Activated CD4-positive, alpha-beta T cell treated with anti-CD3 and anti-CD28 coated beads, Interleukin-2, amount 10 ng/mL, durations not matched to agents 24 days and 14 days (primary cell): ENCODE measurements at regions of chr12 and their contacts with region 1.

Region 1: DNA sequence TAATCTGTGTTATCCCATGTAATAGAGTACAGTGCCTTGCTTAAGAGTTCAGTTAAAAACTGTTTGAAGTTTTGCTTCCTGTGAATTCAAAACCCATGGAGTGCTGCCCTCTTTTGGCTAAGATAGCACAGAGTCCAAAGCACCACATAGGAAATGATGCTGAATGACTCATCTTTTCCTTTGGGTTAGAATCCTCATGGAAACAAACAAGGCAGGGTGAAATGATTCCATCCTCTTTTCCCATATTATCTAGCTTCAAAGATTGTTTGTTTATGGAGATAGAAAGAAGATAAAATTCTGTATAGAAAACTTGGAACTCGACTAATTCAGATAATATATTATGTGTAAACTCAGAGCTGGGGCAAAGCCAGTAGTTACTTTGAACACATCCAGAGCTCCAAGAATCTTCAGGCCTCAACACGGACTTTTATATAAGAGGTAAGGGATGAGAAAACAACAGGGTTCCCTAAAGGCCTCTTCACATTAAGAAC is 87.4 kb downstream of the OTOGL start:
- DNase-seq: peak; percentile 83
- H3K4me3 Mint-ChIP-seq: no peak overlapping the region
- H3K27ac Mint-ChIP-seq: no peak overlapping the region
- H3K4me1 Mint-ChIP-seq: peaks cover 9% of the 10 kb centered on the region
- H3K27me3 Mint-ChIP-seq: peaks cover 2% of the 10 kb centered on the region

Region 2: GRCh38 chr12:79547735-79548609 is 638.8 kb before region 1 on chr12:
- intact Hi-C with region 1: loop called (anchors 5 kb)
- DNase-seq: peak; percentile 66
- H3K4me3 Mint-ChIP-seq: no peak overlapping the region
- H3K27ac Mint-ChIP-seq: no peak overlapping the region
- H3K4me1 Mint-ChIP-seq: no peaks in the 10 kb centered on the region
- H3K27me3 Mint-ChIP-seq: no peaks in the 10 kb centered on the region

Region 3: DNA sequence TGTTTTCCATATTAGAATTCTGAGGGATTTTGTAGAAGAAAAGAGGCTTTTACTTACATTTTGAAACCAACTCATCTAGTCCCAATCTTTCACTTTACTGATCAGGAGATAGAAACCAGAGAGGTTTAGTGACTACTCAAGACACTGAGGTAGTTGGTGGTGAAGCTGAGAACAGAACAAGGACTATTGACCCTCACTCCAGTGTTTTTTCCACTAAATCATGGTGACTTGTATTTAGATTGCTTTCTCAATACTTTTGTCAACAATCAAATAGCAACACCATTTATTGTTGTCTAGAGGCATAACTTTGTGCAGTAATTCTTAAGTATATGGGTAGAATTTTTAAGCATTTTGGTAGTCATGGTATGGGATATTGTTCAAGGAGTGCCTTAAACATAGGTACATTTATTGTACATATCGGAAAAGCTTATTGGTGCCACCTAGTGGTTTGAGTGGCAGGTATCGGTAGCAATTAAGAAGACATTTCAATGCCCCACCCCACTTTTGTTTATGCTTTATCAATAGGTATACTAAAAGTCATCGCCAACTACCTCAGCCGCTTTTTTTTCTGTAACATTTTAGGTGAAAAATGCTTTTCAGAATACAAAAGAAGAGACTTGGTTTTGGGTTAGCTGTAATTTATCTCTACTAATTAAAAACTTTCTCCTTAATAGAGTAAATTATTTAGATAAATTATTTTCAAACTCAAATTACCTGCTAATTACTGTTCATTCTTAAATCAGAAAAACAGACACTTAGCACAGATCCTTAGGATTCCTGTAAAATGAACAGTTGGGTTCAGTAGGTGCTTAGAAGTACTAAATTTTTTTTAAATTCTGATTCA is 448.7 kb before region 1 on chr12:
- intact Hi-C with region 1: loop called (anchors 1 kb)
- DNase-seq: peak; percentile 76
- H3K4me3 Mint-ChIP-seq: no peak overlapping the region
- H3K27ac Mint-ChIP-seq: no peak overlapping the region
- H3K4me1 Mint-ChIP-seq: no peaks in the 10 kb centered on the region
- H3K27me3 Mint-ChIP-seq: peaks cover 5% of the 10 kb centered on the region

Region 4: DNA sequence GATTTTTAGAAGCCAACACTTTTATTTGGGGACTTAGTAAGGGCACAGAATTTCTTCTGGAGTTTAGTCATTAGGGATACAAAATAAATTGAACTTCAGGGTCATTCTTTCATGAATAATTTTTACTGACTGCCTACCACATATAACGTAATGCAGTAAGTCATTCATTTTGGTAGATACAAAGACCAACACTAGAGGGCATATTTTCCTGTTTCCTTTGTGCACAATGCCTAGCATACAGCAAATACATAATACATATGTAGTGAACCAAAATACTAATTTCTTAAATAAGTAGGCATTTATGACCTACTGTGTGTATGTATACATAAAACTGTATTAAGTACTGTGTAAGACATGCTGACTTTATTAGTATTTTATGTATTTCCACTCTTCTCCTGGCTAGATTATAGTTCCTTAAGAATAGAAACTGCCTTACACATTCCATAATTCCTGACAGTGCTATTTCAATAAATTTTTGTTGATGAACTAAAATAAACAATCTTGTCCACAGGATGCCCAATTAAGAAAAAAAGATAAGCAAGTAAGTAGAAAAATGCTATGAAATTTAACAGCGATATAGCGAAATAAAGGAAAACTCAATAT is 299.8 kb before region 1 on chr12:
- intact Hi-C with region 1: loop called (anchors 1 kb)
- DNase-seq: no peak
- H3K4me3 Mint-ChIP-seq: no peak overlapping the region
- H3K27ac Mint-ChIP-seq: no peak overlapping the region
- H3K4me1 Mint-ChIP-seq: peaks cover 21% of the 10 kb centered on the region
- H3K27me3 Mint-ChIP-seq: no peaks in the 10 kb centered on the region

Region 5: DNA sequence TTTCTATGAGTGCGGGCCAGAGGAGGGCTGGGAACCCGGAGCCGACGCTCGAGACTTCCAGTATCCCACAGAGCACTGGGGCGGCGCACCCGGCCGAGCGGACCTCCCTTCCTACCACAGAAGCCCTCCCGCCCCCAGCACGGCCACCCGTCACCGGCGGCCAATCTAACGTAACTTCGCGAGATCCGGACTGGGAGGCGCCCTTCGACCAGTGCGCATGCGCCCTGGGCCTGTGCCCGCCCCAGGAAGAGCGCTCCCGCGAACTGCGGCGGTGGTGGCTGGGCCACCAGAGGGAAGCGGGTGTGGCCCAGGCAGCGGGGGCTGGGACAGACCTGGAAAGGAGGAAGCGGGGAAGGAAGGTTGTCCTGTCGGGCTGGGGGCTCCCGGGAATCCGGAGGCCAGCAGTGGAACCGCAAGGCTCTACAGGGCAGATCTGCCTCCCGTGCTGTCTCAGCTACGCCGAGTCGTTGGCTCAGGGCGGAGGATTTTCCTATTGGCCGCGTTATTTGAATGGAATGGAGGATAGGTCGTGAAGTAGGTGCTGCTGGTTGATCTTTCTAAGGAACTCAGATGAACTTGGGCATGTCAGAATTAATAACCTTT is 251.7 kb before region 1 on chr12 and contains the start of gene PPP1R12A:
- intact Hi-C with region 1: loop called (anchors 1 kb)
- DNase-seq: peak; percentile 98
- H3K4me3 Mint-ChIP-seq: peak within 1 kb of the TSS; percentile 89
- H3K27ac Mint-ChIP-seq: peak within 1 kb of the TSS; percentile 94
- H3K4me1 Mint-ChIP-seq: peaks cover 31% of the 10 kb centered on the region
- H3K27me3 Mint-ChIP-seq: no peaks in the 10 kb centered on the region
- total RNA-seq, gene PPP1R12A: 78.9 and 84.8 TPM in 2 replicates

Region 6: DNA sequence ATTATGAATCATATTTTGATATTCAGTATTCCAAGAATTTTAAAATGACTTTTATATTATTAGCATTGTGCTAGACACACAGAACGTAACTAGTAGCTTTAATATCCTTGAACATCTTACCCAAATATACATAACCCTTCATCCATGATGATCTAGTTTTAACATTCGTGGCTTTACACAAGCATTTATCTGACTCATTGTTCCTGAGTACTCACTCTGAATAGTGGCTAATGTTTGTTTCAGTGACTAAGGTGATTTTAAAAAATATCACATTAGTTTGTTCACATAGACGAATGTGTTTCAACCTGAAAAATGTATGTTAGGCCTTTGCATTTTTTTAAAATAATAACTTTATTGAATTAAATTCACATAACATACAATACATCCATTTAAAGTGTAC is 177.3 kb after region 1 on chr12:
- intact Hi-C with region 1: no loop called
- DNase-seq: no peak
- H3K4me3 Mint-ChIP-seq: no peak overlapping the region
- H3K27ac Mint-ChIP-seq: no peak overlapping the region
- H3K4me1 Mint-ChIP-seq: no peaks in the 10 kb centered on the region
- H3K27me3 Mint-ChIP-seq: no peaks in the 10 kb centered on the region